ENCODE measurements at regions of chr9 and their contacts with region 1.

Region 1: GRCh38 chr9:33225319-33226149 is 14.4 kb upstream of the SPINK4 start:
- DNase-seq: peak in 1 of 2 experiments; percentile 60
- H3K4me3 ChIP-seq: no peak overlapping the region
- H3K27ac ChIP-seq: no peak overlapping the region
- H3K4me1 ChIP-seq: peaks cover 0 to 2% (median 0%) of the 10 kb centered on the region in 4 experiments; a peak in 2 of 7 replicates
- H3K27me3 ChIP-seq: no peaks in the 10 kb centered on the region
- CTCF ChIP-seq: peak in 2 of 3 experiments; percentile 52 to 65; a peak in 2 of 4 replicates
- EP300 ChIP-seq: no peak
- POLR2A ChIP-seq: no peak
- RAD21 ChIP-seq: peak; percentile 74 to 78

Region 2: GRCh38 chr9:33170464-33171415 is 54.8 kb before region 1 on chr9:
- CTCF ChIA-PET with region 1: interaction called, 11 read pairs
- POLR2A ChIA-PET with region 1: no interaction called
- DNase-seq: no peak
- H3K4me3 ChIP-seq: no peak overlapping the region
- H3K27ac ChIP-seq: no peak overlapping the region
- H3K4me1 ChIP-seq: peaks cover 3 to 5% (median 4%) of the 10 kb centered on the region in 4 experiments; a peak in 3 of 7 replicates
- H3K27me3 ChIP-seq: peaks cover 0 to 15% (median 6%) of the 10 kb centered on the region in 4 experiments; a peak in 3 of 7 replicates
- CTCF ChIP-seq: peak; percentile 52 to 65 (median 62)
- EP300 ChIP-seq: no peak
- POLR2A ChIP-seq: no peak
- RAD21 ChIP-seq: peak; percentile 67 to 78

Region 3: DNA sequence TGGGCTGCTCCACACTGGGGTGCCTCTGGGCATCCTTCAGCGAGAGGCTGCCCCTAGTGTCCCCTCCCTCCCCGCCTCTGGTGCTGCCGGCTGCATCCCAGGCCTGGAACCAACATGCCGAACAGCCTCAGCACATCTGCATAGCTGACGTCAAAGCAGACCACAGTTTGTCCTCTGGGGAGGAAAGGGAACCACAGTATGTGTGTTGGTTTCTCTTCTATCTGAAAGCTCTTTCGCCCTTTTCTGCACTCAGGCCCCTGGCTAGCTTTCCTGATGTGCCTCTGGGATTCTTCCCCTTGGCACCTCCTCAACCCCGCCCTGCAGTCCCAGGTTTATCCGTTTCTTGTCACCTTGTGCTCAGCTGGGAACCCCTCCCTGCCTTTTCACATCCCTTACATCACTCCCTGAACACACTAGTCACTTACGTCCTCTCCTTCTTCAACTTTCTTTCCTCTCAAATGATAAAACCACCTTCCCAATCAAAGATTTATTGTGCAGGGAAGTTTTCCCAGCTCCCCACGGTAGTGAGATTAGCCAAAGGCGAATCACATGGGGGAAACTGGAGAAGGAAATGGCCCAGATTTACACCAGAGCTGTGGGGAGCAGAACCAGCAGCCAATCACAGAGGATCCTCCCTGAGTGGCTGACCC is 22.9 kb before region 1 on chr9:
- CTCF ChIA-PET with region 1: interaction called, 42 read pairs
- POLR2A ChIA-PET with region 1: no interaction called
- DNase-seq: no peak
- H3K4me3 ChIP-seq: no peak overlapping the region
- H3K27ac ChIP-seq: no peak overlapping the region
- H3K4me1 ChIP-seq: no peaks in the 10 kb centered on the region
- H3K27me3 ChIP-seq: 0 out of 7 replicates have a peak, but pooled peaks cover 0 to 1% (median 0%) of the 10 kb centered on the region in 4 experiments
- CTCF ChIP-seq: no peak
- EP300 ChIP-seq: no peak
- POLR2A ChIP-seq: no peak
- RAD21 ChIP-seq: no peak

Region 4: GRCh38 chr9:33249087-33249657 is 23.6 kb after region 1 on chr9:
- CTCF ChIA-PET with region 1: interaction called, 13 read pairs
- POLR2A ChIA-PET with region 1: no interaction called
- DNase-seq: no peak
- H3K4me3 ChIP-seq: no peak overlapping the region
- H3K27ac ChIP-seq: no peak overlapping the region
- H3K4me1 ChIP-seq: no peaks in the 10 kb centered on the region
- H3K27me3 ChIP-seq: no peaks in the 10 kb centered on the region
- CTCF ChIP-seq: no peak
- EP300 ChIP-seq: no peak
- POLR2A ChIP-seq: no peak
- RAD21 ChIP-seq: no peak

Region 5: DNA sequence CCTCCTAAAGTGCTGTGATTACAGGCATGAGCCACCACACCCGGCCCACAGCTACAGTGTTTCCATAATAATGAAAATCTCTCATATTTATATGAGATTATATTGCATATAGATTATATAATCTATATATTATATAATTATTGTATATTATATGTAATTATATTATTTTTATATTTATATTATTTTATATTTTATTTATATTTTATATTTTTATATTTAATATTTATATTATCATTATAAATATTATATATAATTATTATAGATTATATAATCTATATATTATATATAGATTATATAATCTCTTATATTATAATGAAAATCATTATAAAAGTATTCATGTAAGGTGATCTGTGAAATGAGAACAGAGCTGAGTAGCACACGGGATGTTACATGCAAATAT is 310.0 kb after region 1 on chr9:
- CTCF ChIA-PET with region 1: no interaction called
- POLR2A ChIA-PET with region 1: no interaction called
- DNase-seq: no peak
- H3K4me3 ChIP-seq: no peak overlapping the region
- H3K27ac ChIP-seq: no peak overlapping the region
- H3K4me1 ChIP-seq: no peaks in the 10 kb centered on the region
- H3K27me3 ChIP-seq: no peaks in the 10 kb centered on the region
- CTCF ChIP-seq: no peak
- EP300 ChIP-seq: no peak
- POLR2A ChIP-seq: no peak
- RAD21 ChIP-seq: no peak